ENCODE measurements at regions of chr6 and their contacts with region 1.

Region 1: GRCh38 chr6:139375232-139376016 is 976 bp upstream of the CITED2 start:
- DNase-seq: peak; percentile 90 to 94
- H3K4me3 ChIP-seq: peak overlapping the region; percentile 74 to 89
- H3K27ac ChIP-seq: peak overlapping the region; percentile 89 to 95
- H3K4me1 ChIP-seq: peaks cover 0 to 14% (median 10%) of the 10 kb centered on the region in 4 donors
- H3K27me3 ChIP-seq: no peaks in the 10 kb centered on the region
- CTCF ChIP-seq: no peak

Region 2: GRCh38 chr6:139539852-139540251 is 164.4 kb after region 1 on chr6:
- intact Hi-C with region 1: loop called (anchors 10 kb)
- DNase-seq: peak; percentile 61 to 89
- H3K4me3 ChIP-seq: no peak overlapping the region
- H3K27ac ChIP-seq: peak overlapping the region; percentile 16 to 57
- H3K4me1 ChIP-seq: peaks cover 0 to 28% (median 14%) of the 10 kb centered on the region in 4 donors
- H3K27me3 ChIP-seq: no peaks in the 10 kb centered on the region
- CTCF ChIP-seq: no peak

Region 3: DNA sequence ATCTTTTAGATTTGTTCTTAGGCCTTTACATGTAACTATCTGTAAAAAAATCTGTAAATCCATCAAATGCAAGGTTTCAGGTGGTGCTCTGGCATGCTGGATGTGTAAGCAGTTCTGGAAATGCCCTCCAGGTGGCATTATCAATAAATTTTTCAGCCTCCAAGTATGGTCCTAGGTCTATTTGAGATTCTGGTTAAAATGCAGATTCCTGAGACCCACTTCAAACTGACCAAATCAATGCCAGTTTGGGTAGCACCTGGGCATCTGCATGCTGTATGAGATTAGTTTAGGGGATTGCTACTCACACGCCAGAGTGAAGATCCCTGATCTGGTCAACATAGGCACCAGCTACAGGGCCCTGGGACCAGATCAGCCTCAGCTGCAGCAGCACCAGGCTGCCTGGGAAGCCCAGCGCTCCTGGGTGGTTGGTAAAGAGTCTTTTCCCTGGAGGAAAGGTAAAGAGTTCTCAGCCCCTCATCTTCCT is 506.3 kb after region 1 on chr6:
- intact Hi-C with region 1: loop called (anchors 10 kb)
- DNase-seq: no peak
- H3K4me3 ChIP-seq: no peak overlapping the region
- H3K27ac ChIP-seq: peak overlapping the region; percentile 25 to 62
- H3K4me1 ChIP-seq: peaks cover 0 to 19% (median 17%) of the 10 kb centered on the region in 4 donors
- H3K27me3 ChIP-seq: no peaks in the 10 kb centered on the region
- CTCF ChIP-seq: peak; percentile 45 to 48

Region 4: GRCh38 chr6:139973669-139974344 is 598.4 kb after region 1 on chr6:
- intact Hi-C with region 1: loop called (anchors 10 kb)
- DNase-seq: no peak
- H3K4me3 ChIP-seq: no peak overlapping the region
- H3K27ac ChIP-seq: peak overlapping the region; percentile 36 to 40
- H3K4me1 ChIP-seq: peaks cover 0 to 30% (median 10%) of the 10 kb centered on the region in 4 donors
- H3K27me3 ChIP-seq: no peaks in the 10 kb centered on the region
- CTCF ChIP-seq: no peak

Region 5: DNA sequence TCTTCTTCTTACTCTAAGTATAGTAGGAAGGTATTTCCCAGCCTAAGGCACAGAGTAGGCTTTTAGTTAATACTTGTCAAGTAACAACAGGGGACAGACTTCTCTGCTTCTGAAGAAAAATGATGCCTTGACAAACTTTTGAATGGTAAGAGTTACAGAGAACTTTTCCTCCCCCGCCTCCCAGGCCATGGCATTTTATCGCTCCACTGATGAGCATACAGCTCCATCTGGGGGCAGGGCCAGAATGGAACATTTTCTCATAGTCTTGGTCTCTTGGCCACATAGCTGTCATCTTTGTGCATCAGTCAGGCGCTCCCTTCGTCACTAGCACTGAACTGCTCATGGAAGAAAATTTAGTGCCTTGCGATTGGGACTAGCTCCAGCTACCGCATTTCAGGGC is 1065.8 kb after region 1 on chr6:
- intact Hi-C with region 1: loop called (anchors 2 kb)
- DNase-seq: peak; percentile 28 to 67
- H3K4me3 ChIP-seq: no peak overlapping the region
- H3K27ac ChIP-seq: no peak overlapping the region
- H3K4me1 ChIP-seq: peaks cover 0 to 28% (median 4%) of the 10 kb centered on the region in 4 donors
- H3K27me3 ChIP-seq: no peaks in the 10 kb centered on the region
- CTCF ChIP-seq: peak; percentile 18 to 31

Measured in tibial artery (tissue), 4 donors.